Activated naive CD4-positive, alpha-beta T cell treated with anti-CD3 and anti-CD28 coated beads for 36 hours (primary cell): ENCODE measurements at regions of chr16 and their contacts with region 1.

Region 1: GRCh38 chr16:3787924-3788661 is 70.8 kb upstream of the TRAP1 start:
- DNase-seq: no peak
- H3K4me3 Mint-ChIP-seq: no peak overlapping the region
- H3K27ac Mint-ChIP-seq: no peak overlapping the region
- H3K4me1 Mint-ChIP-seq: peaks cover 47% of the 10 kb centered on the region
- H3K27me3 Mint-ChIP-seq: peaks cover 2% of the 10 kb centered on the region

Region 2: DNA sequence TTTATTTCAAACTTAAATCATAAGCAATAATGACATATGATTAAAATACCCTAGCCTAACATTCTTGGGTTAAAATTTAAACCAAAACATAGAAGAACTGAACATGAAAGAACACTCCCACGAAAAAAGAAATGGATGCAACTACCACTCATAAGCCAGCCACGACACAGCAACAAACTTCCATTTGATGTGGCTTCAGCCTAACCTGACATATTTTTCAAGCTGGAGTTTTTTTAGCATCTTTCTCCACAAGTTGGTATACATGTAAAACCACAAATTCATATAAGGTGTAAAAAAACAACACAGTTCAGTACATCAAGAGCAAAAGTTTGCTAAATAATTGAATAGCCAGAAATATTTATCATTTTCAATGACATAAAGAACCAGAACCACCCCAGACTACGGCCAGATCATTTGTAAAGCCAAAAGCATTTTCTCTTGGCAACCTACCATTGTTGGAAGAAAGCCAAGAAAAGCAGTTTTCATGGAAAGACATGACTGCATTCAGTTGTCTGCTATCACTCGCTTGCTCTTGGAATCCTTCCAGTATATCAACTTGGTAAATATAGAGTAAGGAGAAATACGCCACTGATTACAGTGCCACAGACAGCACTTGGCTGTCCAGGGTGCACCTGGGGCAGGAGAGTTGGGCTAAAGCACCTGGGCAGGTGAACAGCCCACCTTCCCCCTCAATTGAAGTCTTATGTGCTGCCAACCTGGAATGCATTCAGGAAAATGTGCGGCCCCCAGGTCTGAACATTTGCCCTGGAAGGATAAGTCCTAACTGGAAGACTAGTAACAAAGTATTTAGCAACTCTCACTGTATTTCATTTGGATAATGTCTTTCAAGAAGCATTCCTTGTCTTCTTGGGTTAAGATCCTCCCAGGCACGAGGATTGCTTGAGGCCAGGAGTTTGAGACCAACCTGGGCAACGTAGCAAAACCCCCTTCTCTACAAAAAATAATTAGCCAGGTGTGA is 31.9 kb after region 1 on chr16:
- CTCF ChIA-PET with region 1: no interaction called
- intact Hi-C with region 1: loop called (anchors 5 kb)
- DNase-seq: no peak
- H3K4me3 Mint-ChIP-seq: no peak overlapping the region
- H3K27ac Mint-ChIP-seq: no peak overlapping the region
- H3K4me1 Mint-ChIP-seq: peaks cover 90% of the 10 kb centered on the region
- H3K27me3 Mint-ChIP-seq: no peaks in the 10 kb centered on the region